ENCODE measurements at regions of chr12 and their contacts with region 1.

Region 1: GRCh38 chr12:112130441-112130998 is 5.2 kb downstream of the TRAFD1 start:
- DNase-seq: no peak
- H3K4me3 Mint-ChIP-seq: peak overlapping the region; percentile 55
- H3K27ac Mint-ChIP-seq: peak overlapping the region; percentile 76
- H3K4me1 Mint-ChIP-seq: peaks cover 56% of the 10 kb centered on the region
- H3K27me3 Mint-ChIP-seq: no peaks in the 10 kb centered on the region

Region 2: GRCh38 chr12:112087055-112087850 is 43.3 kb before region 1 on chr12:
- CTCF ChIA-PET with region 1: interaction called, 3 read pairs
- POLR2A ChIA-PET with region 1: interaction called, 9 read pairs
- intact Hi-C with region 1: loop called (anchors 1 kb)
- DNase-seq: no peak
- H3K4me3 Mint-ChIP-seq: no peak overlapping the region
- H3K27ac Mint-ChIP-seq: peak overlapping the region; percentile 26
- H3K4me1 Mint-ChIP-seq: peaks cover 25% of the 10 kb centered on the region
- H3K27me3 Mint-ChIP-seq: no peaks in the 10 kb centered on the region

Region 3: DNA sequence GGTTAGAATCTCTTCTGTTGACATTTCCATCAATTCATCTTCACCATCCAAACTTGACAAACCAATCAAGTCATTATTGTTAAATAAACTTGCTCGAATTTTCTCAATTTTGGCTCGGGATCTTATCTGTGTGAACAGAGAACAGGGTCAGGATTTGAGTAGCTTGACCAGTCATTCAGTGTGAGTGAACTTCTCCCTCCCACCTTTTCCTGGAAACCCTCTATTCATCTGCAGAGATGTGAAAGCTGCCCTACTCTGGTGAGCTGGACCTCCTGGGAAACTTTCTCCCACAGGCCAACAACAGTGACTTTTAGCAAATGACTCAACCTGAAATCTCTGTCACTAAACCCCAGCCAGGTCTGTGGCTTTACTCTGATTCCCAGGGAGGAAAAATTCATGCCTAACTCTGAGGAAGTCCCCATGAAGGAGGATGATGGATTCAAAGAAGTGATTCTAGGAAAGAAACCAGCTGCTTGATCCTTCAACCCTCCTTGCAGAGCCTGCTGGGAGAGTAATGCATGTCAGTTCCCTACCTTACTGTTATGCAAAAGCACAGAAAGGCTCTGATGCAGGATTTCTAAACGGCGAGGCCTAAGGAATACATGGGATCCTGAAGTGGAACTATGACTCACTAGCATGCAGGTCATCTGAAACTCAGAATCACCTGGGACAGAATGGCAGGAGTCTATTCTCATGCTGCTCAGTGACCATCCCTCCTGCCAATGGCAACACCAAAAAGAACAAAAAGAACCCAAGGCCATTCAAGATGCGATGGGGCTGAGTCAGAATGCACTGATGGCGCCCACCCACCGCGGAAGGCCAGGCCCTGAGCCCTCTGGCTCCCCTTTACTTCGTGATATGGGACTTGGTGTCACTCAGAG is 52.9 kb after region 1 on chr12:
- CTCF ChIA-PET with region 1: no interaction called
- POLR2A ChIA-PET with region 1: interaction called, 7 read pairs
- intact Hi-C with region 1: loop called (anchors 1 kb)
- DNase-seq: peak; percentile 69
- H3K4me3 Mint-ChIP-seq: no peak overlapping the region
- H3K27ac Mint-ChIP-seq: peak overlapping the region; percentile 46
- H3K4me1 Mint-ChIP-seq: peaks cover 20% of the 10 kb centered on the region
- H3K27me3 Mint-ChIP-seq: no peaks in the 10 kb centered on the region